Activated CD4-positive, alpha-beta T cell treated with anti-CD3 and anti-CD28 coated beads, Interleukin-2, amount 10 ng/mL, durations not matched to agents 24 days and 14 days (primary cell): ENCODE measurements at regions of chr20 and their contacts with region 1.

Region 1: GRCh38 chr20:52972190-52972937 is at the start of gene TSHZ2:
- DNase-seq: peak; percentile 87
- H3K4me3 Mint-ChIP-seq: peak within 1 kb of the TSS; percentile 98
- H3K27ac Mint-ChIP-seq: peak within 1 kb of the TSS; percentile 98
- H3K4me1 Mint-ChIP-seq: peaks cover 29% of the 10 kb centered on the region
- H3K27me3 Mint-ChIP-seq: peaks cover 10% of the 10 kb centered on the region
- total RNA-seq, gene TSHZ2: 28.0 and 29.5 TPM in 2 replicates

Region 2: DNA sequence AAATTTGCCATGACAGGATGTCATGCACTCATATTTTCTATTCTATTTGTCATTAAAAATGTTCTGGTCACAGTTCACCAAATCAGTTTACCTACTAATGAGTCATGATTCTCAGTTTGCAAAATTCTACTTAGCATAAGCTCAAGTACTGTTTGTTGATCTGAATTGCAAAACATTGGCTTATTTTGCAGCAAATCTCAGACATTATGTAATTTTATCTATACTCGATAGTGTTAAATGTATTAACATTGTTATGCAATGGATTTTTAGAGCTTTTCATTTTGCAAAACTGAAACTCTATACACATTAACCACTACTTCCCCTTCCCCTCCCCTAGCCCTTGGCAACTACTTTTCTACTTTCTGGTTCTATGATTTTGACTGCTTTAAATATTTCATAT is 566.9 kb before region 1 on chr20:
- intact Hi-C with region 1: loop called (anchors 5 kb)
- DNase-seq: no peak
- H3K4me3 Mint-ChIP-seq: no peak overlapping the region
- H3K27ac Mint-ChIP-seq: peak overlapping the region; percentile 65
- H3K4me1 Mint-ChIP-seq: peaks cover 47% of the 10 kb centered on the region
- H3K27me3 Mint-ChIP-seq: no peaks in the 10 kb centered on the region

Region 3: DNA sequence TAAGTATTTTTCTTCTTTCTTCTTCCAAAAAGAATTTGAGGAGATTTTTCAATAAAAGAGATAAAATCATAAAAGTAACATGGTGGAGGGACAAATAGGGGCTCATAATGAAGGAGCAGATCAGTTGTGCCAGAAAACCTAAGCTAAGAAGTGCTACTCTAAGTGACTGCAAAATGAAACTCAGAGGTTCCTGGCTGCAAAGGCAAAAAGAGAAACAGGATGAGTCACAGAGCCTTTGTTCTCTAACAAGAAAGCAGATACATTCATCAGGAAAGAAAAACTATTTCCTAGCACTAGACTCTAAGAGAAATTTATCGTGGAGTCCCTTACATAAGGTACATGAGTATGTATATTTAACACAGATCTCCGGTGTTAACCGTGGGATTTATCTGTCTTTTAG is 49.6 kb after region 1 on chr20:
- intact Hi-C with region 1: loop called (anchors 1 kb)
- DNase-seq: peak; percentile 80
- H3K4me3 Mint-ChIP-seq: peak overlapping the region; percentile 65
- H3K27ac Mint-ChIP-seq: peak overlapping the region; percentile 85
- H3K4me1 Mint-ChIP-seq: peaks cover 71% of the 10 kb centered on the region
- H3K27me3 Mint-ChIP-seq: no peaks in the 10 kb centered on the region

Region 4: GRCh38 chr20:53077373-53078205 is 105.2 kb after region 1 on chr20:
- intact Hi-C with region 1: loop called (anchors 1 kb)
- DNase-seq: peak; percentile 68
- H3K4me3 Mint-ChIP-seq: no peak overlapping the region
- H3K27ac Mint-ChIP-seq: no peak overlapping the region
- H3K4me1 Mint-ChIP-seq: peaks cover 37% of the 10 kb centered on the region
- H3K27me3 Mint-ChIP-seq: no peaks in the 10 kb centered on the region

Region 5: DNA sequence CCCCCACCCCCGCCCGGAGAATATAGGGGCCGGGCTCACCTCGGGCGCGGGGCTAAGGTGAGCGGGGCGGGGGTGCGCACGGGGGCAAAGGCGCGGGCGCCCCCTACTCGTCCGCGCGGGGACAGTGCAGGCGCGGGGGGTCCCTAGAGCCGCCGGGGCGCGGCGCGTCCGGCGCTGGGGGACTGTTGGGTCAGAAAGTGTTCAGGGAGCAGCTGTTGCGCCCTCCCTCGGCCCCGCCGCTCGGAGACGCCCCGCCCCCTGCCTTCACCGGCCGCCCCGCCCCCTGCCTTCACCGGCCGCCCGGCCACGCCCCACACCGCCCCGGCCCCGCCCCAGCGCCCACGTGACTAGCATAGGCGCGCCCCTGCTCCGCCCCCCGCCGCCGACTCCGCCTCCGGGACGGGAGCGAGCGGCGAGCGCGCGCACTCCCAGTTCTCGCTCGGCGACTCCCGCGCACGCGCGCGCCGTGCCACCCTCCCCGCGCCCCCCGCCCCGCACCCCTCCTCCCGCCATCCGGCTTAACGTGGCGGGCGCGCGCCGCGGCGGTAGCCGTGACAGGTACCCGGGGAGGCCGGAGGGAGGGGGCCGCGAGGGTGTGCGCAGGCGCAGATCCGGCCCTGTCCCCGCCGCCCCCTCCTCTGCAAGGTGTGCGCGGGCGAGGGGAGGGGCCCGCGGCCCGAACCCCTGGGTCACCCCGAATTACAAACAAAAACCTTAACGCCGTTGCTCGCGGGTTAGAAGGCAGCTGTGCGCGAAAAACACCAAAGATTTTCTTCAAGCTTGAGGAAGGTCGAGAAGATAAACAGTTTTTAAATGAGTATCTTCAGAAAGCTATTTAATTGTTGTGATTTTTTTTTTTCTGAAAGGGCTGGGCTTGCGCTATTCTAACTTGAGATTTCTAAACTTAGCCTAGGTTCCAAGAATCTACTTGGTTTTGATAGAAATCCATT is 622.0 kb after region 1 on chr20:
- intact Hi-C with region 1: loop called (anchors 5 kb)
- DNase-seq: peak; percentile 99
- H3K4me3 Mint-ChIP-seq: peak overlapping the region; percentile 86
- H3K27ac Mint-ChIP-seq: peak overlapping the region; percentile 93
- H3K4me1 Mint-ChIP-seq: peaks cover 45% of the 10 kb centered on the region
- H3K27me3 Mint-ChIP-seq: no peaks in the 10 kb centered on the region